Panc1 (cell line): ENCODE measurements at regions of chr2 and their contacts with region 1.

Region 1: GRCh38 chr2:4066217-4066616 is 362.8 kb downstream of the DCDC2C start:
- DNase-seq: no peak
- ATAC-seq: no peak
- H3K4me3 ChIP-seq: no peak overlapping the region
- H3K27ac ChIP-seq: no peak overlapping the region
- H3K4me1 ChIP-seq: no peaks in the 10 kb centered on the region
- H3K27me3 ChIP-seq: no peaks in the 10 kb centered on the region
- CTCF ChIP-seq: no peak

Region 2: GRCh38 chr2:3930246-3930645 is 136.0 kb before region 1 on chr2:
- CTCF ChIA-PET with region 1: no interaction called
- POLR2A ChIA-PET with region 1: no interaction called
- in situ Hi-C with region 1: no loop called
- intact Hi-C with region 1: no loop called
- DNase-seq: no peak
- ATAC-seq: no peak
- H3K4me3 ChIP-seq: no peak overlapping the region
- H3K27ac ChIP-seq: no peak overlapping the region
- H3K4me1 ChIP-seq: no peaks in the 10 kb centered on the region
- H3K27me3 ChIP-seq: no peaks in the 10 kb centered on the region
- CTCF ChIP-seq: no peak

Region 3: DNA sequence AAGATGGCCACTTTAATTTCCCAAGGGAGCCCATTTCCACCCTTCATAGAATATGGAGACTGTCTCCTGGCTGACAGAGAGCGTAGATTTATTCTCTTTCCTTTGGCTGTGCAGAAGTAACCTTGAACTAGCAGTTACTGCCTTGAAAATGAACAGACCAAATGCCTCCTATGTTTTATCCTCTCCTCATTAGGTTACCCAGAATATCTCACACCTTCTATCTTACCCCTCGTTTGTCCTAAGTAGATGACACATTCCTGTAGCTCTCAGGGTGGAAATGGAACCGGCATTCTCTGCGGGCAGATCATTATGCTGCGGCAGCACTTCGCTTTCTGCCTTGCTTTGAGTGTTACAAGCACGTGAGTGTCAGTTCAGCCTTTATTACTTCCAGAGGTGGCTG is 26.3 kb before region 1 on chr2:
- CTCF ChIA-PET with region 1: no interaction called
- POLR2A ChIA-PET with region 1: no interaction called
- in situ Hi-C with region 1: no loop called
- intact Hi-C with region 1: loop called (anchors 1 kb)
- DNase-seq: no peak
- ATAC-seq: no peak
- H3K4me3 ChIP-seq: no peak overlapping the region
- H3K27ac ChIP-seq: no peak overlapping the region
- H3K4me1 ChIP-seq: no peaks in the 10 kb centered on the region
- H3K27me3 ChIP-seq: no peaks in the 10 kb centered on the region
- CTCF ChIP-seq: no peak